Caco-2 (cell line): ENCODE measurements at regions of chr6 and their contacts with region 1.

Region 1: DNA sequence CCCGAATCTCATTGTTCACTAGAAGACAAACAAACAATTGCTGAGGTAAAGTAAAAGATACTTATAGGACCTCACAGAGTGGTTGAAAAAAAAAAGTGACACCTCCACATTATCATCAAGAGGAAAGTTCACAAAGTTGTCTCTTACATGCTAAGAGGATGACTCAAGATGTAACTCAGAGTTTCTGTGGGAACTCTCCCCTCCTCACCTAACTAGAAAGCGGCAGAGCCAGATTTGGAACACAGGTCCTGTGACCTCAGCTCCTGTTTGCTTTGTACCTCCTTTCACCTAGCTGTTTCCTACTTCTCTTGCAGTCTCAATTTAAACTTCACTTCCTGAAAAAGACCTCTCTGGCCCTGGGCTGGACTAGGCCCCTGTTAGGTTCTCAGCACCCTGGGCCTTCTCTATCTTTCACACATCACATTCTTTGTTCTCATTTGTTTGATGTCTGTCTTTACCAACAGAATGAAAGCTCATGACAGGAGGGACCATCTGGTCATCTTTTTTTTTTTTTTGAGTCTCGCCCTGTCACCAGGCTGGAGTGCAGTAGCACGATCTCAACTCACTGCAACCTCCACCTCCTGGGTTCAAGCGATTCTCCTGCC is 60.8 kb downstream of the CD24 start:
- DNase-seq: peak in 1 of 2 experiments; percentile 34
- H3K4me3 ChIP-seq: no peak overlapping the region
- H3K4me3 Mint-ChIP-seq: peak overlapping the region; percentile 15
- H3K27ac Mint-ChIP-seq: peak overlapping the region; percentile 86
- H3K4me1 ChIP-seq: peaks cover 43% of the 10 kb centered on the region
- H3K4me1 Mint-ChIP-seq: peaks cover 36% of the 10 kb centered on the region
- H3K27me3 ChIP-seq: no peaks in the 10 kb centered on the region
- H3K27me3 Mint-ChIP-seq: no peaks in the 10 kb centered on the region
- CTCF ChIP-seq: no peak

Region 2: DNA sequence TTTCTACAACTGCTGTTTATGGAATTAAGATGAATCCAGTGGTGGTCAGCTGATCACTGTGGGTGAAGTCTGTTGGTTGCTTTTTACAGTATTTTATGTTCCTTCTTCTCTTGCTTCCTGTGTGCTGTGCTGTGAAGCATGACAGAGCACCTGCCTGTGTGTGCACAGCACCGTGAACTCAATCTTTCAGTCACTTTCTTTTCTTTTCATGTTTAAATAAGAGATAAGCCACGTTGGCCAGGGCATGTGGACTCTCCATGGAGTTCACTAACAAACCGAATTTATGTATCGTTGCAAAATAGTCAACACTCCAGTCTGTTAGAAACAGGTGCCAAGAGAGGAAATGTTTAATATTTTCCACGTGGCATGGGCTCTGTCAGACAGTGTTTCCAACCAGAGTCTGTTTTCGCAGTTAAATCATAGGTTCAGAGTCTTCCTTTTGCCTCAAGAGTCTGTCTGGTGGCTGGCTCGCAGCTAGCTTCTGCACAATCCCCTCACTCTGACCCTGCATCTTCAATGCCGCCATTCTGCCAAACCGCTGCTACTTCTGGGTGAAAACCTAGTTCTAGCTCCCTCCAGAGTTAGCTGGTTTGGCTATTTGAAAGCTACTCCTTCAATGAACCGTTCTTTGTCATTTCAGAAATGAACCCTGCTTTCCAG is 211.2 kb before region 1 on chr6:
- CTCF ChIA-PET with region 1: no interaction called
- POLR2A ChIA-PET with region 1: no interaction called
- intact Hi-C with region 1: loop called (anchors 5 kb)
- DNase-seq: peak; percentile 35 to 38
- H3K4me3 ChIP-seq: peak overlapping the region; percentile 8
- H3K4me3 Mint-ChIP-seq: peak overlapping the region; percentile 52
- H3K27ac Mint-ChIP-seq: no peak overlapping the region
- H3K4me1 ChIP-seq: peaks cover 15% of the 10 kb centered on the region
- H3K4me1 Mint-ChIP-seq: peaks cover 16% of the 10 kb centered on the region
- H3K27me3 ChIP-seq: no peaks in the 10 kb centered on the region
- H3K27me3 Mint-ChIP-seq: no peaks in the 10 kb centered on the region
- CTCF ChIP-seq: no peak

Region 3: GRCh38 chr6:106883808-106884262 is 29.9 kb before region 1 on chr6:
- CTCF ChIA-PET with region 1: no interaction called
- POLR2A ChIA-PET with region 1: no interaction called
- intact Hi-C with region 1: loop called (anchors 2 kb)
- DNase-seq: no peak
- H3K4me3 ChIP-seq: no peak overlapping the region
- H3K4me3 Mint-ChIP-seq: no peak overlapping the region
- H3K27ac Mint-ChIP-seq: no peak overlapping the region
- H3K4me1 ChIP-seq: peaks cover 35% of the 10 kb centered on the region
- H3K4me1 Mint-ChIP-seq: peaks cover 31% of the 10 kb centered on the region
- H3K27me3 ChIP-seq: no peaks in the 10 kb centered on the region
- H3K27me3 Mint-ChIP-seq: no peaks in the 10 kb centered on the region
- CTCF ChIP-seq: peak; percentile 18